Right ventricle myocardium inferior (tissue), 1 donor: ENCODE measurements at regions of chr4 and their contacts with region 1.

Region 1: DNA sequence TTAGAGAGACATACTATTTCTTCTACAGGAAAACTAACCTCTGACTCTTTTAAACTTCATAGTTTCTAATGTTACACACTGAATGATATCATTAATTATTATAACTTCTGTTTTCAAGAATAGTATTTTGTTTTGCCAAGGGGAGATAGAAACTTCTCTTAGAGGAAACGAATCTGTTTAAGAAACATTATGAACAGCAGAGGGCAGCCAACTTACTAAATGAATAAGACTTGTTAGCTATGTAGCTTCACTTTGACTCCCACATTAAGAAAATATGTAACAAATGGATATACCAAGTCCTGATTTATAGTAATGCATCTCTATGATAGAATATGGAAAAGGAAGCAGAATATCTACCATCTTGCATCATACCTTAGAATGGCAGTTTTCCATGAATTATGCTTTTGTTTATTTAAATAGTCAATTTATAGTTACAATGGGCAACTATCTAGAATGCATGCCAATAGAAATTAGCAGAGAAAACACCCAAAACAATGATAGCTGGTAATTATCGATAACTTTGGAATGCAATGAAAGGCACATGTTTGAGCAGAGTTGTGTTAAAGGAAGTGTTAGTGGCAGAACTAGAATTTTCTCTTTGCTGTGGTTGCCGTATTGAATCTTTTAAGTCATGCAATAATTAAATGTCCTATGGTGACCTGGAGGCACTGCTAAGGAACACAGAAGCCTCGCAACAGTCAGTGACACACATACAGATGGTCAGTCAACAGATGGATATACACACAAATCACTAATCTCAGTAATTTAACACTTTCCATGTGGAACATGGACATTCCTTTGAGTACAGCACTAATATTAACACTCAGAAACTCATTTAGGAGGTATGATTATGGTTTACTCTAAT is 105.7 kb upstream of the PDLIM3 start:
- DNase-seq: no peak
- ATAC-seq: no peak

Region 2: GRCh38 chr4:185235843-185236503 is 405.1 kb before region 1 on chr4:
- intact Hi-C with region 1: no loop called
- DNase-seq: no peak
- ATAC-seq: peak; percentile 28

Region 3: GRCh38 chr4:186021461-186022167 is 380.6 kb after region 1 on chr4:
- intact Hi-C with region 1: loop called (anchors 5 kb)
- DNase-seq: no peak
- ATAC-seq: peak; percentile 64

Region 4: DNA sequence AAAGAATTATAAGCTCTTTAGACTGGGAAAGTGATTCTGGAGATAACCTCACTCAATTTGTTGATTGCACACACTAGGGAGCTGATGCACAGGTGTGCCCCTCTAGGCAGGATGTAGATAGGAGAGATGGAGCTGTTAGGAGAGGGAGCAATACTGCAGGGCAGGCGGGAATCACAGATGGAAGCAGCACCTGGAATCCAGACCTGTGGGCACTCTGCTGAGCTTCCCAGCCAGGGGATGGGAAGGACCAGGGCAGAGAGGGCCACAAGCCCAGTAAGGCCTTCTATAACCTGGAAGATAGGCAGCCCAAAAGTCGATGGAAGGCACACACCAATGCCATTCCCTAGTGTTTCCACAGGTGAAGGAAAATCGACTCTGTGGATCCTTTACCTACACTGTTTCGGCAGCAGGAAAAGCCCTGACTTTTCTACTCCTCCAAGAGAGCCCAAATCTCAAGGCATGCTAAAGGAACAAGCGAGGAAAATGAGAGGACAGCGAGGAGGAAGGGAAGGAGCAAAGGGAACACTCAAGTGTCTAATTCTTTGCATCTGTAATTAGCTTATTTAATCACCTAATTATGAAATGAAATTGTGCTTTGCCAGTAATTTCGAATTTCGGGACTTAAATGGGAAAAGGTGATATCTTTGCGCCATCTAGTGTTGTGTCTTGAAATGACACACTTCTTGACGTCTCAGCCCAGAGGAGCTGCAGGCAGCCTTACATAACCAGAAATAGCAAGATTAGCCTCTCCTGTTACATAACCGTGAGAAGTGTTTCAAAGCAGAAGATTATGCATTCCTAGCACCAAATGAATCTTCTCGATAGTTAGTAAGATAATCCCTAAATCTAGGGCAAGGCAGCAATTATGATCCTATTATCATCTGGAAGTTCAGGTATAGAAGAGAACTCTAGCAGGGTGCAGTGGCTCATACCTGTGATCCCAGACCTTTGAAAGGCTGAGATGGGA is 396.9 kb after region 1 on chr4:
- intact Hi-C with region 1: loop called (anchors 5 kb)
- DNase-seq: no peak
- ATAC-seq: peak; percentile 88